CD8-positive, alpha-beta T cell (primary cell): ENCODE measurements at regions of chr1 and their contacts with region 1.

Region 1: DNA sequence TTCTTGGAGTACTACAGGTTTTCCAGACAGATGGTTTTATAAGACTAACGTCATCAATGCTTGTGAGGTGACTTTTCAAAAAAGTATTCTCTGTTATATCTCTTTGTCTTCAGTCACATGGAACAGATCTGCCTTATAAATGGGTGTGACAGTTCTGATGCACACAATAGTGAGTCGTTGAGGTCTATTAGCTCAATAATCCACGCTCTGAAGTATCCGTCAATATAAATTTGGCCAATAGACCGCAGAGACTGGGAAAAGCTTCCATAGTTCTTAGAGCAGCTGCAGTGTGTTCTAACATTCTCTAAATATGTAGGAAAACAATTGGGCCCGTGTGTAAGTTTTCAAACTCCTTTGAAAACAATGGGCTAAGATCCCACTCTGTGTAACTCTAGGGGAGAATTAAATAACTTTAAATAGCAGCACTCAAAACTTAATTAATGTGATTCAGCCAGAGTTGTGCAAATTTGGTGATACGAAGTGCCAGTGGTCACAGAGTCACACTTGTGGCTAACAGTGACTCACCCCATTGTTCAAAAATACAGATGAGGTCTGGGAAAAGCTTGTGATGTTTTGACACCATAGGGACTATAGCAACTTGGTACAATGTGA is 316.0 kb downstream of the LMO4 start:
- DNase-seq: no peak
- ATAC-seq: no peak
- H3K4me3 ChIP-seq: no peak overlapping the region
- H3K4me3 Mint-ChIP-seq: no peak overlapping the region
- H3K27ac ChIP-seq: no peak overlapping the region
- H3K27ac Mint-ChIP-seq: no peak overlapping the region
- H3K4me1 ChIP-seq: no peaks in the 10 kb centered on the region
- H3K4me1 Mint-ChIP-seq: no peaks in the 10 kb centered on the region
- H3K27me3 ChIP-seq: no peaks in the 10 kb centered on the region
- H3K27me3 Mint-ChIP-seq: no peaks in the 10 kb centered on the region
- CTCF ChIP-seq: no peak

Region 2: GRCh38 chr1:87673748-87674147 is 29.1 kb after region 1 on chr1:
- CTCF ChIA-PET with region 1: no interaction called
- POLR2A ChIA-PET with region 1: no interaction called
- intact Hi-C with region 1: loop called in 1 of 2 experiments (anchors 1 kb)
- DNase-seq: no peak
- ATAC-seq: no peak
- H3K4me3 ChIP-seq: no peak overlapping the region
- H3K4me3 Mint-ChIP-seq: no peak overlapping the region
- H3K27ac ChIP-seq: no peak overlapping the region
- H3K27ac Mint-ChIP-seq: no peak overlapping the region
- H3K4me1 ChIP-seq: no peaks in the 10 kb centered on the region
- H3K4me1 Mint-ChIP-seq: no peaks in the 10 kb centered on the region
- H3K27me3 ChIP-seq: no peaks in the 10 kb centered on the region
- H3K27me3 Mint-ChIP-seq: peaks cover 3% of the 10 kb centered on the region
- CTCF ChIP-seq: no peak